ENCODE measurements at regions of chr18 and their contacts with region 1.

Region 1: GRCh38 chr18:57881818-57882413 is 78.8 kb upstream of the ATP8B1 start:
- H3K4me3 ChIP-seq: no peak overlapping the region
- H3K27ac ChIP-seq: no peak overlapping the region
- H3K4me1 ChIP-seq: no peaks in the 10 kb centered on the region
- CTCF ChIP-seq: peak; percentile 88

Region 2: DNA sequence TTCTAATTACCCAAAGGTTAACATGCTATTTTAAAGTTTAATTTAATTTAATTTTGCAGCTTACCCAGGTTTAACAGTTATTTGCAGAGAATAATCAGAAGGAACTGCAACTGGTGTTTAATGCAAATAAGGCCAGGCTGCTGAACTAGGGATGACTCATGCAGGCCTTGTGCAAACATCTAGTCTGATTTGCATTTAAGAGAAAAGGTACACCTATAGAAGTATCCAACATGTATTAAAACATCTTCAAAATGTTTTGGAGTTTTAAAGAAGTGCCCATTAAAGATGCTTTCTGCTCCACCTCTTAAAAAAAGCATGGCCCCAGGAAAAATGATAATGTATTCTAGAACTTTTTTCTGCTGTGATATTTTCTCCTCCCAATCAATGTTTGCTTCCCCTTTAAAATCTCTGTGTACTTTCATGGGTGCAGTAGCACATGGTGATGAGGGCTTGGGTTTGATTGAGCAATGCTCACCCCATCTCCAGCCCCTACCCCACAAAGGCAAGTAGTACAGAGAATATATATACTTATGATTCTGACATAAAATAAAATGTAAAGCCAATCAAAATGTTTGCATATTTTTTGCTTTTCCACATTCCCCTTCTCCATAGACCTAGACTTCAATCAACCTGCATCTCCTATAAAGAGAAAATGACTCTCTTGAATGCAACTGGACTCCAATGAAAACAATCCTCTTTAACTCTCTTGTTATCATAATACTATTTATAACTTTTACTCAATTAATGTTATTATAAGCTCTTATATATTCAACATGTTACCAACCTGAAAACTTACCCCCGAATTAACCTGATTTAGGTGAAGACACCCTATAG is 132.9 kb before region 1 on chr18:
- CTCF ChIA-PET with region 1: no interaction called
- POLR2A ChIA-PET with region 1: no interaction called
- H3K4me3 ChIP-seq: no peak overlapping the region
- H3K27ac ChIP-seq: 0 out of 2 replicates have a peak overlapping the region, but pooled peaks have one; percentile 52
- H3K4me1 ChIP-seq: peaks cover 30% of the 10 kb centered on the region
- CTCF ChIP-seq: no peak

Region 3: DNA sequence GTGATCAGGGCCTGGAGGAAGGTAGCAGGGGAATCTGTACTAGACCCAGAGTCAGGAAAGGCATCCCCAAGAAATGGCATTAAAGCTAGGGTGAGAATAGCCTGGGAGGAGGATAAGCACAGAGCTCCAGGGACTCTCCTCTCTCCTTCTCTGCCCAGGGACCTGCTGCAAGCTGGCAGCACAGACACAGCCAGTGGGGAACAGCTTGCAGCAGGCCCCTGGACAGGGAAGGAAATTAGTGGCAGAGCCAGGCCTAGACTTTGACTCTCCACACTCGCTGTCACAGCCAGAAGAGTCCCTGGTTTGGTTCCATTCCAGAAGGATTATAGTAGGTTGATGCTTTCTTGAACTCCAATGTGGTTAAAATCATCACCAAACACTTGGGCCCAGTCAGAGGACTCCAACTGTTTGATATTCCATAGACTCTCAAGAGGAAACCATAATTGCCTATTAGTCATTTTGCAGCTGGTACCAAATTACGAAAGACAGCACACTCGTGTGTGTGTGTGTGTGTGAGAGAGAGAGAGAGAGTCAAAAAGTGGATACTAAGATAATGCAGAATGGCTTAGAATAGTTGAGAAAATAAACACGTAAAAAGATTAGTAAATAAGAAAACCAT is 16.7 kb after region 1 on chr18:
- CTCF ChIA-PET with region 1: interaction called, 17 read pairs
- POLR2A ChIA-PET with region 1: no interaction called
- H3K4me3 ChIP-seq: no peak overlapping the region
- H3K27ac ChIP-seq: no peak overlapping the region
- H3K4me1 ChIP-seq: no peaks in the 10 kb centered on the region
- CTCF ChIP-seq: no peak

Measured in HEK293 (cell line).